Activated B cell treated with CpG ODN at 0.5 μM for 24 hours (primary cell): ENCODE measurements at regions of chr11 and their contacts with region 1.

Region 1: DNA sequence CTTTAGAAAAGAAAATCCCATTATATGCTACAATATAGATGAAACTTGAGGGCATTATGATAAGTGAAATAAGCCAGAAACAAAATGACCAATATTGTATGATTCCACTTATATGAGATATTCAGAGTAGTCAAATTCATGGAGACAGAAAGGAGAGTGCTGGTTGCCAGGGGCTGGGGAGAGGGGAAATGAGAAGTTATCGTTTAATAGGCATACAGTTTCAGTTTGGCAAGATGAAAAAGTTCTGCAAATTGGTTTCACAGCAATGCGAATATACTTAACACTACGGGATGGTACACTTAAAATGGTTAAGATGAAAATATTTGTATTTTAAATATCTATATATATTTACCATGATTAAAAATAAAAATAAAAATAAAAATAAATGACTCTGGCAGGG is 31.1 kb upstream of the RDX start:
- DNase-seq: no peak
- ATAC-seq: no peak
- H3K4me3 Mint-ChIP-seq: peak overlapping the region; percentile 77
- H3K27ac Mint-ChIP-seq: peak overlapping the region; percentile 87
- H3K4me1 Mint-ChIP-seq: peaks cover 20% of the 10 kb centered on the region
- H3K27me3 Mint-ChIP-seq: peaks cover 2% of the 10 kb centered on the region
- CTCF ChIP-seq: no peak

Region 2: GRCh38 chr11:110311783-110312579 is 15.5 kb before region 1 on chr11:
- CTCF ChIA-PET with region 1: no interaction called
- POLR2A ChIA-PET with region 1: no interaction called
- intact Hi-C with region 1: loop called (anchors 1 kb)
- DNase-seq: no peak
- ATAC-seq: peak; percentile 66
- H3K4me3 Mint-ChIP-seq: no peak overlapping the region
- H3K27ac Mint-ChIP-seq: peak overlapping the region; percentile 41
- H3K4me1 Mint-ChIP-seq: peaks cover 13% of the 10 kb centered on the region
- H3K27me3 Mint-ChIP-seq: no peaks in the 10 kb centered on the region
- CTCF ChIP-seq: no peak

Region 3: GRCh38 chr11:110337570-110338193 is 10.2 kb after region 1 on chr11:
- CTCF ChIA-PET with region 1: no interaction called
- POLR2A ChIA-PET with region 1: interaction called, 3 read pairs
- intact Hi-C with region 1: loop called (anchors 1 kb)
- DNase-seq: no peak
- ATAC-seq: peak; percentile 54
- H3K4me3 Mint-ChIP-seq: no peak overlapping the region
- H3K27ac Mint-ChIP-seq: peak overlapping the region; percentile 35
- H3K4me1 Mint-ChIP-seq: peaks cover 15% of the 10 kb centered on the region
- H3K27me3 Mint-ChIP-seq: no peaks in the 10 kb centered on the region
- CTCF ChIP-seq: no peak

Region 4: GRCh38 chr11:110349138-110349996 is 21.9 kb after region 1 on chr11:
- CTCF ChIA-PET with region 1: interaction called, 3 read pairs
- POLR2A ChIA-PET with region 1: interaction called, 7 read pairs
- intact Hi-C with region 1: loop called (anchors 1 kb)
- DNase-seq: no peak
- ATAC-seq: peak; percentile 81
- H3K4me3 Mint-ChIP-seq: peak overlapping the region; percentile 55
- H3K27ac Mint-ChIP-seq: peak overlapping the region; percentile 71
- H3K4me1 Mint-ChIP-seq: peaks cover 27% of the 10 kb centered on the region
- H3K27me3 Mint-ChIP-seq: no peaks in the 10 kb centered on the region
- CTCF ChIP-seq: no peak